ENCODE measurements at regions of chr10 and their contacts with region 1.

Region 1: DNA sequence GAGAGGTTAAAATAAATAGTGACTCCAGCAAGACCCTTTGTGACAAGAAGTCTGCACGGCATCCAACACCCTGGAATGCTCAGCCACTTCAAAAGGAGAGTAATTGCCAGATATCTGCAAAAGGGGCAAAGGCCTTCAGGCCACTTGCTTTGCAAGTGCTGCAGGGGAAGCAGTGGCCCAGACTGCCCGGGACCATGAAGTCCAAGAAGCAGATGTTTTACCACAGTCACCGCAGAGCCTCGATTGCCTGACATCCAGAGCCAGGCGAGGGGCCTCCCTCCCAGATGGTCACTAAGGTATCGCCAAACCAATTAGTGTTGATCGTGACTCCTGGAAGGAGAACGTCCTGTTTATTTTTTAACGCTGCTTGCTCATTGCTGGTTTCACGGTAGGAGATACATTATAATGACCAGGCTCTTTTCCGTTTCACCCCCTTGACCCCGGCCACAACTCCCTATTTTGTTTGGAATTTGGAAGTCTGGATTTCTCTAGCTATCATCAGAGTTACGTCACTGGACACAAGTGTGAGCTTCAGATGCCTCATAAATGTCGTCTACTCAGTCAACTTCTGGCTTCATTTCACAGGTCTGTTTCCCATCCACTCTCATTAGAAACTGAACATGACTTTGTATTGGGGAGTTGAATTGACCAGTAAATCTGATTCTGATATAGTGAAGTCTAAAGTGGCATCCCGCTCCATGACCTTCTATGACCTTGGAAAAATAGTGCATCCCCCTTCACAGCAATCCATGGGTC is 276.2 kb downstream of the WDR11 start:
- DNase-seq: no peak
- ATAC-seq: no peak
- H3K4me3 ChIP-seq: no peak overlapping the region
- H3K27ac ChIP-seq: no peak overlapping the region
- H3K4me1 ChIP-seq: no peaks in the 10 kb centered on the region
- H3K27me3 ChIP-seq: peaks cover 3% of the 10 kb centered on the region; the same call in 1 of the 2 replicates
- CTCF ChIP-seq: no peak

Region 2: DNA sequence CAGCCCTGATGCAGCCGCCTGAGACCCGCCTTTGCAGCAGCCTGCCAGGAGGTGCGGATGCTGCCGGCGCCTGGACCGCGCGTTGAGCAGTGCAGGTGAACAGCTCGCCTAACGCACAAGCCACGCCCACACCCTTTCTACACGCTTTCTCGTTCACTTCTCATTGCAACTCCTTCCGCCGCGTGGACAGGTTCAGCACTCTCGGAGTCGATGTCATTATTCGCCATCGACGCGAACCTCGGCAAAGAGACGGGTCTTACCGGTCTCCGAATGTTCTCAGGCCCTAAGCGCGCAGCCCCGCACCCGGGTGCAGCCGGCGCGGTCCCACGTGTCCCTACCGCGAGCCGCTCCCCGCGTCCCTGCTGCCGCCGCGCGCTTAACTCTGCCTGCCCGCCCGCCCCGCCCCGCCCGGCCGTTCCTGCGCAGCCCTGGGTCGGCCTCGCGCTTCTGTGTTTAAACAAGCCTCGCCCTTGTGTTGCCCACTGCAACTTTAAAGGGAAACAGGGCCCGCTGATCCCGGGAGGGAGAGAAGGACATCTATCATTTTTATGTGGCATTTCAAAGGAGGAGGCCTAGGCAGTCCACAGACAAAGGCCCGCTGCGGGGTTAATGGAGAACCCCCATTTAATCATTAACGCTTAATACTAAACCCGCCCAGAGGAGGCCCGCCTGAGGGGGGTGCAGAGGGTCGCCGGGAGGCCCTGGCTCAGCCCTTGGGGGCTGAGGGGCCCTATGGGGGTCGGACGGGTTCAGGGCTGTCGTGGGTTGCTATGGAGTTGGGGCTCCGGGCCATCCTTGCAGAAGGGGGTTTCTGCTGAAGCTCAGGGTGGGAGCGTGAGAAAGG is 147.7 kb before region 1 on chr10:
- CTCF ChIA-PET with region 1: no interaction called
- POLR2A ChIA-PET with region 1: no interaction called
- in situ Hi-C with region 1: no loop called
- intact Hi-C with region 1: no loop called
- DNase-seq: no peak
- ATAC-seq: peak; percentile 82
- H3K4me3 ChIP-seq: peak overlapping the region; percentile 25 to 46
- H3K27ac ChIP-seq: no peak overlapping the region
- H3K4me1 ChIP-seq: peaks cover 9% of the 10 kb centered on the region
- H3K27me3 ChIP-seq: peaks cover 12% of the 10 kb centered on the region
- CTCF ChIP-seq: no peak

Region 3: GRCh38 chr10:121365566-121365965 is 238.2 kb after region 1 on chr10:
- CTCF ChIA-PET with region 1: interaction called, 11 read pairs
- POLR2A ChIA-PET with region 1: no interaction called
- in situ Hi-C with region 1: no loop called
- intact Hi-C with region 1: no loop called
- DNase-seq: no peak
- ATAC-seq: no peak
- H3K4me3 ChIP-seq: no peak overlapping the region
- H3K27ac ChIP-seq: no peak overlapping the region
- H3K4me1 ChIP-seq: no peaks in the 10 kb centered on the region
- H3K27me3 ChIP-seq: peaks cover 4% of the 10 kb centered on the region; the same call in 1 of the 2 replicates
- CTCF ChIP-seq: no peak

Measured in Panc1 (cell line).